Dendritic cell treated with granulocyte-macrophage colony-stimulating factor and Interleukin-4, amounts not matched to agents 40 ng/mL and 50 ng/mL, for 4 days (primary cell): ENCODE measurements at regions of chr16 and their contacts with region 1.

Region 1: DNA sequence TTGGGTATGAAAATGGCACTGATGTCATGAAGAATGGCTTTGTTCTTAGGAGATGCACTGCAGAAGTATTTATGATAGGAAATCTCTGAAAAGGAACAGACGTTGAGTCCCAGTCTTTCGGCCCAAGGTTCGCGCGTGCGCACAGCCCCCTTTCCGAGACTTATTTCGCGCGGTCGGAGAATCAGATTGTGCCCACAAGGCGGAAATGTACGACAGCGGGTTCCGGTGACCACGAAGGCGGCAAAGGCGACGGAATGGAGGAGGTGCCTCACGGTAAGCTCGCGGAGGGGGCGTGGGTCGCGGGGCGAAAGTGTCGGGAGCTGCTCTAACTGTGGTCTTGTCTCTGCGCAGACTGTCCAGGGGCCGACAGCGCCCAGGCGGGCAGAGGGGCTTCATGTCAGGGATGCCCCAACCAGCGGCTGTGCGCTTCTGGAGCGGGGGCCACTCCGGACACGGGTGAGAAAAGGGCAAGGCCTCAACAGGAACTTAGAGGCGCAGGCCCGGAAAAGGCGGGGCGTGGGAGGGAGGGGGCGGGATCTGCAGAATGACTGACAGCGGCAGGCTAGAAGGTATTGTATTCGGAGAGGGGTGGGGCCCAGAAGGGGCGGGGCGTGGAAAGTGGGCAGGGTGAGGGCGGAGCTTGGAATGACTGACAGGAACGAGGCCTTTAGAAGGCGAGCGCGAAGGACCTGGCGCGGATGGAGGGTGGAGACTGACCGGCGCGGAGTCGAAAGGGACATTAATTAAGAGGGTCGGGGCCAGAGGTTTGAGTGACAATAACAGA is at the start of gene NUBP1:
- H3K4me3 Mint-ChIP-seq: peak within 1 kb of the TSS; percentile 84
- H3K27ac Mint-ChIP-seq: peak within 1 kb of the TSS; percentile 98
- H3K4me1 Mint-ChIP-seq: peaks cover 74% of the 10 kb centered on the region
- H3K27me3 Mint-ChIP-seq: no peaks in the 10 kb centered on the region

Region 2: DNA sequence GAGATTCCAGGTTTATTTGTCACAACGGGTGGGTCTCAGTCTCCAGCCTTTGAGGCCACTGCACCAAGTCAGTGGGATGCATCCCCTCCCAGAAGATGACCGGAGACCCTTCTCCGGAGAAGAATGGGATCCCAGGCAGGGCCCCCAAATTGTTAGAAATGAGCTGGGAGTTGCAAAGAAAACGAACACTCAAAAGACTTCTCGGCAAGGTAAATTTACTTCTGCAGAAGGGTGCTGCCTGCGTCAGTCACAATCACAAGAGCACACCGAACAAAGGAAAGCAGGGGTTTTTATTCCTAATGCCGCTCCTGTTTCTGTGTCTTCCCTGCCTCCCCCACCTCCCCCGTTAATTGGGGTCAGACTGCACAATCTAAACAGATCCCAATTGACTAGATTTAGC is 296.5 kb before region 1 on chr16:
- intact Hi-C with region 1: no loop called
- H3K4me3 Mint-ChIP-seq: no peak overlapping the region
- H3K27ac Mint-ChIP-seq: no peak overlapping the region
- H3K4me1 Mint-ChIP-seq: no peaks in the 10 kb centered on the region
- H3K27me3 Mint-ChIP-seq: no peaks in the 10 kb centered on the region

Region 3: DNA sequence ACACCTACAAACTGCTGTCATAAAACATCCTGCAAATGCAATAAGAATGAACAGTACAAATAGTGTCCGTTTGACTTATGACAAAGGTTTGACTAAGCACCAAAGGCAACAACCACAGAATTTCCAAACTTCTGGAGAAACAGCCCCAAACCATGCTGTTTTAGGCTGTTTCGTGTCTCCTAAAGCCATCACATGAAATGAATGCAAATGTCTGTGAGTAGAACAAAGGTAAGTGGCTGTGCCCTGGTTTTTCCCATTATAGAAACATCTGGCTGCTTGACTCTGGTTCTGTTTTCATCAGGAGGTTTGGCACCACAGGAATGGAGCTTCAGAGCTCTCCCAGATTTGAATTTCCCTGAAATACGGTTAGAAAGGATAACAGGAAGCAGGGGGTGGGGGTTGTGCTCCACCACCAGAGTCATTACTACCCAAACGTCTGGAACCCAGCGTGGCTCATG is 158.8 kb before region 1 on chr16:
- intact Hi-C with region 1: no loop called
- H3K4me3 Mint-ChIP-seq: no peak overlapping the region
- H3K27ac Mint-ChIP-seq: no peak overlapping the region
- H3K4me1 Mint-ChIP-seq: peaks cover 9% of the 10 kb centered on the region
- H3K27me3 Mint-ChIP-seq: peaks cover 56% of the 10 kb centered on the region

Region 4: GRCh38 chr16:10776280-10776679 is 32.5 kb after region 1 on chr16:
- intact Hi-C with region 1: no loop called
- H3K4me3 Mint-ChIP-seq: no peak overlapping the region
- H3K27ac Mint-ChIP-seq: peak overlapping the region; percentile 39
- H3K4me1 Mint-ChIP-seq: peaks cover 43% of the 10 kb centered on the region
- H3K27me3 Mint-ChIP-seq: peaks cover 1% of the 10 kb centered on the region

Region 5: GRCh38 chr16:10876799-10877341 is 133.1 kb after region 1 on chr16 and contains the start of gene CIITA:
- intact Hi-C with region 1: loop called (anchors 2 kb)
- H3K4me3 Mint-ChIP-seq: peak within 1 kb of the TSS; percentile 89
- H3K27ac Mint-ChIP-seq: peak within 1 kb of the TSS; percentile 92
- H3K4me1 Mint-ChIP-seq: peaks cover 66% of the 10 kb centered on the region
- H3K27me3 Mint-ChIP-seq: no peaks in the 10 kb centered on the region

Region 6: GRCh38 chr16:10918294-10919002 is 174.6 kb after region 1 on chr16:
- intact Hi-C with region 1: no loop called
- H3K4me3 Mint-ChIP-seq: no peak overlapping the region
- H3K27ac Mint-ChIP-seq: peak overlapping the region; percentile 87
- H3K4me1 Mint-ChIP-seq: peaks cover 85% of the 10 kb centered on the region
- H3K27me3 Mint-ChIP-seq: no peaks in the 10 kb centered on the region